ENCODE measurements at regions of chr2 and their contacts with region 1.

Region 1: GRCh38 chr2:99489761-99490622 is at the start of gene REV1:
- DNase-seq: peak; percentile 77 to 96
- H3K4me3 ChIP-seq: peak within 1 kb of the TSS; percentile 77
- H3K27ac ChIP-seq: peak within 1 kb of the TSS; percentile 66
- H3K4me1 ChIP-seq: peaks cover 19% of the 10 kb centered on the region
- H3K27me3 ChIP-seq: no peaks in the 10 kb centered on the region
- CTCF ChIP-seq: peak; percentile 89
- total RNA-seq, gene REV1: 47.8 and 50.5 TPM in 2 replicates

Region 2: GRCh38 chr2:98649135-98649991 is 840.6 kb before region 1 on chr2:
- CTCF ChIA-PET with region 1: no interaction called
- POLR2A ChIA-PET with region 1: no interaction called
- intact Hi-C with region 1: loop called (anchors 1 kb)
- DNase-seq: peak; percentile 75 to 78
- H3K4me3 ChIP-seq: no peak overlapping the region
- H3K27ac ChIP-seq: no peak overlapping the region
- H3K4me1 ChIP-seq: no peaks in the 10 kb centered on the region
- H3K27me3 ChIP-seq: no peaks in the 10 kb centered on the region
- CTCF ChIP-seq: peak; percentile 100

Region 3: GRCh38 chr2:99085421-99085820 is 404.6 kb before region 1 on chr2:
- CTCF ChIA-PET with region 1: no interaction called
- POLR2A ChIA-PET with region 1: no interaction called
- intact Hi-C with region 1: loop called (anchors 5 kb)
- DNase-seq: no peak
- H3K4me3 ChIP-seq: no peak overlapping the region
- H3K27ac ChIP-seq: no peak overlapping the region
- H3K4me1 ChIP-seq: no peaks in the 10 kb centered on the region
- H3K27me3 ChIP-seq: no peaks in the 10 kb centered on the region
- CTCF ChIP-seq: peak; percentile 72

Region 4: GRCh38 chr2:99337113-99338028 is 152.6 kb before region 1 on chr2 and contains the start of gene EIF5B:
- CTCF ChIA-PET with region 1: no interaction called
- POLR2A ChIA-PET with region 1: interaction called, 4 read pairs
- intact Hi-C with region 1: loop called (anchors 1 kb)
- DNase-seq: peak; percentile 91 to 95
- H3K4me3 ChIP-seq: peak within 1 kb of the TSS; percentile 79
- H3K27ac ChIP-seq: peak within 1 kb of the TSS; percentile 77
- H3K4me1 ChIP-seq: peaks cover 29% of the 10 kb centered on the region
- H3K27me3 ChIP-seq: no peaks in the 10 kb centered on the region
- CTCF ChIP-seq: peak; percentile 75
- total RNA-seq, gene EIF5B: 53.4 and 56.7 TPM in 2 replicates

Region 5: DNA sequence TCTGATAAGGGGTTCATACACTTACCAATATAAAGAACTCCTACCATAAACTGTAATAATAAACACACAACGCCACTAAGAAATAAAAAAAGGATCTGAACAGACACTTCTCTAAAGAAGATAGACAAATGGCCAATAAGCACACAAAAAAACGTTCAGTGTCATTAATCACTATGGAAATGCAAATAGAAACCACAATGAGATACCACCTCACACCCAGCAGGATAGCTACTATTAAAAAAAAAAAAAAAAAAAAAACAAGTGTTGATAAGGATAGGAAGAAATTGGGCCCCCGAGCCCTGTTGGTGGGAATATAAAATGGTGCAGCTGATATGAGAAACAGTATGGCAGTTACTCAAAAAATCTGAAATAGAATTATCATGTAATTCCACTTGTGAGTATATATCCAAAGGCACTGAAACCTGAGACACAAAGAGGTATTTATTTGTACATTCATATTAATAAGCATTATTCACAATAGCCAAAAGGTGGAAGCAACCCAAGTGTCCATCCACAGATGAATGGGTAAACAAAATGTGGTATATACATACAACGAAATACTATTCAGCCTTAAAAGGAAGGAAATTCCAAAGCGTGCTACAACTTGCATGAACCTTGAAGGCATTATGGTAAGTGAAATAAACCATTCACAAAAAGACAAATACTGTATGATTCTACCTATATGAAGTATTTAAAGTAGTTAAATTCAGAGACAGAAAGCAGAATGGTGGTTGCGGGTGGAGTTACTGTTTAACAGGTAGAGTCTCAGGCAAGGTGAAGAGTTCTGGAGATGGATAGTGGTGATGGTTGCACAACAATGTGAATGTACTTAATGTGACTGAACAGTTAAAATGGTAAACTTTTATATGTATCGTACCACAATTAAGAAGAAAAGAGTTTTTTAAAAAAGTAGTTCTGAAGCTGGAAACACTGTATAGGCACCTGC is 18.1 kb before region 1 on chr2:
- CTCF ChIA-PET with region 1: no interaction called
- POLR2A ChIA-PET with region 1: no interaction called
- intact Hi-C with region 1: loop called (anchors 2 kb)
- DNase-seq: no peak
- H3K4me3 ChIP-seq: no peak overlapping the region
- H3K27ac ChIP-seq: no peak overlapping the region
- H3K4me1 ChIP-seq: peaks cover 8% of the 10 kb centered on the region; the same call in 1 of the 2 replicates
- H3K27me3 ChIP-seq: no peaks in the 10 kb centered on the region
- CTCF ChIP-seq: no peak

Region 6: GRCh38 chr2:99559075-99559662 is 69.2 kb after region 1 on chr2:
- CTCF ChIA-PET with region 1: no interaction called
- POLR2A ChIA-PET with region 1: no interaction called
- intact Hi-C with region 1: no loop called
- DNase-seq: peak; percentile 51 to 76
- H3K4me3 ChIP-seq: no peak overlapping the region
- H3K27ac ChIP-seq: no peak overlapping the region
- H3K4me1 ChIP-seq: no peaks in the 10 kb centered on the region
- H3K27me3 ChIP-seq: peaks cover 94% of the 10 kb centered on the region
- CTCF ChIP-seq: peak; percentile 99